ENCODE measurements at regions of chr5 and their contacts with region 1.

Region 1: DNA sequence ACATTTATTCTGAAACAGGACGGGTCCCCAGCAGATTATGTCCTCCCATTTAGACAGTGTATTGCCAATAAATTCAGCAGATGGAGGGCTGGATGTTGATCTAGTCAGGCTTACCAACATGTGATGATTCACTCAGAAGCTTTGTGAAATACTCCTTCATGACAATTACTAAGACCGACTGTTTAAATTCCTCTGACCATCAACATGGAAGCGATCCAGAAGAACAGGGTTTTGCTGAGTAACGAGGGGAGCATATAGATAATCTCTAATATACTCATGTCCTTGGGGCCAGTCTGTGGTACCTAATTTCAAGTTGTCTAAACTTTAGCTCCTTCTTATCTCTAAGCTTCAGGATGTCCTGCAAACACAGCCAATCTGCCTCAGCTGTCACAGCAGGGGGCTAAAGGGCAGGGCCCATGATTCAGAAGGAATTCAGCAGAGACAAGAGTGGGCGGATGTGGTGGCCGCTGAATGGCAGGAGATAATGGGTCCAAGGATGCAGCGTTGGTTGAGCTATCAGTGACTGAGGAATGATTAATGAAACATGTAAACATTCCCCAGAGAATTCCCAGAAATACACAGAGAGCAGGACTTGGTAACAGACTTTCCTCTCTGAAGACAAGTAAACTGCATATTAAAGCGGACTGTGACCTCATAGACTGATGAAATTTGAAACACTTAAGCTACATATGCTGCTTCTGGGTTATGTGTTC is 109.4 kb downstream of the ANKRD55 start:
- DNase-seq: peak; percentile 89
- H3K4me3 Mint-ChIP-seq: no peak overlapping the region
- H3K27ac Mint-ChIP-seq: peak overlapping the region; percentile 78
- H3K4me1 Mint-ChIP-seq: peaks cover 13% of the 10 kb centered on the region
- H3K27me3 Mint-ChIP-seq: no peaks in the 10 kb centered on the region
- CTCF ChIP-seq: no peak

Region 2: DNA sequence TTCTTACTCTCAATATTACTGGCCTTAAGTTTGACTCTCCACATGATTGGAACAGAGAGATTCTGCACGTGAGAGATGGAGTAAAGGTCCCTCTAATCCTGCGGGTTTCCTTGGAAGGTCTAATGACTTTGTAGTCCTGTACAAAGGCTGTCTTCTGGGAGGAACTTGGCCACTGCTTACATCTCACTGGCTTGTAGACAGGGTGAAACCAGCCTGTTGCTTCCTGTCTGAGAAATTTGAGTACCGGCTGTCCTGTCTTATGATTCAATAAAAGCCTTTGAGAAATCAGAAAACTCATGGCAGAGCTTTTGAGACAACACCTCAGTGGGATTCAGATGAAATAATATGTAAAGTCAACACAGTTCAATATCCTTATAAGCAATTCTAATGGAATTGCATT is 229.6 kb before region 1 on chr5:
- CTCF ChIA-PET with region 1: no interaction called
- POLR2A ChIA-PET with region 1: no interaction called
- intact Hi-C with region 1: no loop called
- DNase-seq: no peak
- H3K4me3 Mint-ChIP-seq: no peak overlapping the region
- H3K27ac Mint-ChIP-seq: no peak overlapping the region
- H3K4me1 Mint-ChIP-seq: no peaks in the 10 kb centered on the region
- H3K27me3 Mint-ChIP-seq: no peaks in the 10 kb centered on the region
- CTCF ChIP-seq: no peak

Region 3: GRCh38 chr5:56112526-56113121 is 11.1 kb before region 1 on chr5:
- CTCF ChIA-PET with region 1: no interaction called
- POLR2A ChIA-PET with region 1: interaction called, 9 read pairs
- intact Hi-C with region 1: loop called (anchors 1 kb)
- DNase-seq: peak; percentile 96
- H3K4me3 Mint-ChIP-seq: peak overlapping the region; percentile 21
- H3K27ac Mint-ChIP-seq: peak overlapping the region; percentile 54
- H3K4me1 Mint-ChIP-seq: peaks cover 17% of the 10 kb centered on the region
- H3K27me3 Mint-ChIP-seq: no peaks in the 10 kb centered on the region
- CTCF ChIP-seq: no peak

Measured in MCF 10A (cell line).